CD4-positive, alpha-beta memory T cell (primary cell): ENCODE measurements at regions of chr2 and their contacts with region 1.

Region 1: GRCh38 chr2:190338453-190338852 is 4.9 kb upstream of the INPP1 start:
- DNase-seq: no peak
- H3K4me3 ChIP-seq: no peak overlapping the region
- H3K4me3 Mint-ChIP-seq: no peak overlapping the region
- H3K27ac ChIP-seq: no peak overlapping the region
- H3K27ac Mint-ChIP-seq: no peak overlapping the region
- H3K4me1 ChIP-seq: peaks cover 3% of the 10 kb centered on the region
- H3K4me1 Mint-ChIP-seq: peaks cover 4 to 13% (median 7%) of the 10 kb centered on the region in 4 donors
- H3K27me3 ChIP-seq: no peaks in the 10 kb centered on the region
- H3K27me3 Mint-ChIP-seq: no peaks in the 10 kb centered on the region

Region 2: GRCh38 chr2:190376591-190377245 is 38.3 kb after region 1 on chr2:
- CTCF ChIA-PET with region 1: no interaction called
- POLR2A ChIA-PET with region 1: no interaction called
- intact Hi-C with region 1: loop called (anchors 1 kb)
- DNase-seq: no peak
- H3K4me3 ChIP-seq: no peak overlapping the region
- H3K4me3 Mint-ChIP-seq: no peak overlapping the region
- H3K27ac ChIP-seq: no peak overlapping the region
- H3K27ac Mint-ChIP-seq: no peak overlapping the region
- H3K4me1 ChIP-seq: no peaks in the 10 kb centered on the region
- H3K4me1 Mint-ChIP-seq: peaks cover 0 to 2% (median 0%) of the 10 kb centered on the region in 4 donors
- H3K27me3 ChIP-seq: no peaks in the 10 kb centered on the region
- H3K27me3 Mint-ChIP-seq: no peaks in the 10 kb centered on the region